ENCODE measurements at regions of chr2 and their contacts with region 1.

Region 1: DNA sequence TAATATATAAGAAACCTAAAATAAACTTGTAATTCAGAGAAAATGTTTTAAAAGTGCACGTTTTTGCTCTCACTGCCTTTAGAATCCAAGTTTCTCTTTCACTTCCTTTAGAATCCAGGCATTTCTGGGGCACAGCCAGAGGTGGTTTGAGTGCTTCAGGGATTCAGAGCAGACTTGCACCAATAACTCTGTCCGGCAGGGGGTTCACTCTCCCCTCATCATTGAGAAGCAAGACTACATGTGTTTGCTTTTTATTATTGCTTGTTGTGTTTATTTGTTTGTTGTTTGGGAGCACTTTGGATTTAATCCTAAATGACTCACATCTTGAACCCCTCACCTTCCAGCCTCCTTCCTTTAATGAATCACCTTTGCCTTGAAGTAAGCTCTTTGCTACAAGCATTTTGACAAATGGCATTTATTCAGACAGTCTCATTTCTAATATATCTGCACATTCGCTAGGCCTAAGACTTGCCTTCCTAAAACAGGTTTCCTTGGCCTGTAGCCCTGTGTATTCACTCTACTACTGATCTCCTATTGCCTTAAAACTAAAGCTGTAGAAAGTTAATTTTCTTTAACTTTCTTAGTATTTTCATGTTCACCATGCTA is 233.5 kb upstream of the ATP5MC3 start:
- DNase-seq: peak in 1 of 2 experiments; percentile 47
- H3K4me3 ChIP-seq: no peak overlapping the region
- H3K27ac ChIP-seq: no peak overlapping the region
- H3K4me1 ChIP-seq: no peaks in the 10 kb centered on the region
- H3K27me3 ChIP-seq: peaks cover 5% of the 10 kb centered on the region; the same call in 1 of the 2 replicates
- CTCF ChIP-seq: peak; percentile 87

Region 2: DNA sequence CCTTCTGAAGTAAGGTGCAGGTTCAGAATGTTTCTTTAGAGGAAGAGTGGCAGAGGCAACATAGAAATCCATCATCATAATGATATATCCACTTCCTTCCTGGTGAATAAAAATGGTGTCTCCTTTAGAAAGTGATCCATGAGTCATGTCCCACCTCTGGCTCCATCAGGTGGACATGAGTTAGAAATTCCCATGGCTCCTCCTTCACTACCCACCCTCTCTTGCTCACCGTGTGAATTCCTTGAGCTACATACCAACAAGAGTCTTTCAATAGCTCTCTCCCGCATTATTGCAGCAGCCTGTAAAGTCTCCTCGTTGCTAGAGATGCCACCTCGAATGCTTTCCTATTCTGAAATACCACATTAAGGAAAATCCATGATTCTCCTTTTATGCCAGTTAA is 269.5 kb after region 1 on chr2:
- CTCF ChIA-PET with region 1: no interaction called
- POLR2A ChIA-PET with region 1: no interaction called
- intact Hi-C with region 1: loop called (anchors 10 kb)
- DNase-seq: no peak
- H3K4me3 ChIP-seq: no peak overlapping the region
- H3K27ac ChIP-seq: no peak overlapping the region
- H3K4me1 ChIP-seq: no peaks in the 10 kb centered on the region
- H3K27me3 ChIP-seq: peaks cover 57% of the 10 kb centered on the region
- CTCF ChIP-seq: no peak

Measured in PC-9 (cell line).